ENCODE measurements at regions of chr1 and their contacts with region 1.

Region 1: GRCh38 chr1:225860876-225861441 is 21.2 kb downstream of the TMEM63A start:
- DNase-seq: no peak
- H3K4me3 ChIP-seq: no peak overlapping the region
- H3K4me3 Mint-ChIP-seq: no peak overlapping the region
- H3K27ac ChIP-seq: no peak overlapping the region
- H3K27ac Mint-ChIP-seq: peak overlapping the region in 4 of 7 donors; percentile 18 to 78 (median 68)
- H3K4me1 ChIP-seq: peaks cover 9% of the 10 kb centered on the region
- H3K4me1 Mint-ChIP-seq: peaks cover 6 to 49% (median 23%) of the 10 kb centered on the region in 4 donors
- H3K27me3 ChIP-seq: no peaks in the 10 kb centered on the region
- H3K27me3 Mint-ChIP-seq: no peaks in the 10 kb centered on the region

Region 2: DNA sequence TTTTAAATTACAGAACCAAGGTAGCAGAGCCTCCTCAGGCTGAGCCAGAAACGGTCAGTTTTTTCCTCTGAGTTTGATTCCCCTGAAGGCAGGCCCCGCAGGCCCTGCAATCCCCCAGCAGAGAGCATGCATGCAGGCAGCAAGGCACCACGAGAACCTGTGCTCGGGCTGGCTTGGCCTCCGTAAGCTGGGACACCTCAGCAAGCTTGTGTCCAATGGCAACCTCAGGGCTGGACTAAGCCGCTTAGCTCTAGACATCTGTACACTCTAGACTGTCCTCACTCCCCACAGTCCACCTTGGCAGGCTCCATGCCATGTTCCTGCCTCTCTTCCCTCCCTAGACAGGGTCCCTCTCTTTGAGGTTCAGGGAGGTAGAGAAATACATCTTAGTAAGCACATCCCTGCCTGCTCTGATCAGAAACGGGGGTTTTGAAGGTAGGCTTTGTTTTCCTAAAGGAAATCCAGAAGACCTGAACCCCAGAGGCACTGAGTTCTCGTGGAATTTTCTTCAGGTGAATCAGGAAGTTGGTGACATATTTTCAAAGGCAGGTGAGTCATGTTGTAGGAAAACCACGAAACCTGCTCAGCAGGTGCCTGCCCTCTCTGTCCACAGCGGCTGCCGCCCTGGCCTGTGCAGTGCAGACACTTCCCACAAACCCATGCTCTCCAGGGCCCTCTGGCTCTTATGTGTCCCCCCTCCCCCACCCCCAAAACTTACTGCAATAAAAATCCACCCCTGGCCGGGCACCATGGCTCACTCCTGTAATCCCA is 14.3 kb after region 1 on chr1:
- CTCF ChIA-PET with region 1: interaction called, 21 read pairs
- POLR2A ChIA-PET with region 1: interaction called, 74 read pairs
- intact Hi-C with region 1: no loop called
- DNase-seq: no peak
- H3K4me3 ChIP-seq: no peak overlapping the region
- H3K4me3 Mint-ChIP-seq: peak overlapping the region; percentile 4 to 63 (median 57)
- H3K27ac ChIP-seq: peak overlapping the region; percentile 26
- H3K27ac Mint-ChIP-seq: peak overlapping the region; percentile 79 to 97 (median 83)
- H3K4me1 ChIP-seq: peaks cover 77% of the 10 kb centered on the region
- H3K4me1 Mint-ChIP-seq: peaks cover 52 to 93% (median 73%) of the 10 kb centered on the region in 4 donors
- H3K27me3 ChIP-seq: no peaks in the 10 kb centered on the region
- H3K27me3 Mint-ChIP-seq: no peaks in the 10 kb centered on the region